Activated CD4-positive, alpha-beta T cell treated with anti-CD3 and anti-CD28 coated beads, Interleukin-2, amount 10 ng/mL, durations not matched to agents 24 days and 14 days (primary cell): ENCODE measurements at regions of chr19 and their contacts with region 1.

Region 1: GRCh38 chr19:9785367-9786331 is 17.1 kb upstream of the ZNF846 start:
- DNase-seq: peak; percentile 97
- H3K4me3 Mint-ChIP-seq: peak overlapping the region; percentile 90
- H3K27ac Mint-ChIP-seq: peak overlapping the region; percentile 94
- H3K4me1 Mint-ChIP-seq: peaks cover 19% of the 10 kb centered on the region
- H3K27me3 Mint-ChIP-seq: no peaks in the 10 kb centered on the region

Region 2: DNA sequence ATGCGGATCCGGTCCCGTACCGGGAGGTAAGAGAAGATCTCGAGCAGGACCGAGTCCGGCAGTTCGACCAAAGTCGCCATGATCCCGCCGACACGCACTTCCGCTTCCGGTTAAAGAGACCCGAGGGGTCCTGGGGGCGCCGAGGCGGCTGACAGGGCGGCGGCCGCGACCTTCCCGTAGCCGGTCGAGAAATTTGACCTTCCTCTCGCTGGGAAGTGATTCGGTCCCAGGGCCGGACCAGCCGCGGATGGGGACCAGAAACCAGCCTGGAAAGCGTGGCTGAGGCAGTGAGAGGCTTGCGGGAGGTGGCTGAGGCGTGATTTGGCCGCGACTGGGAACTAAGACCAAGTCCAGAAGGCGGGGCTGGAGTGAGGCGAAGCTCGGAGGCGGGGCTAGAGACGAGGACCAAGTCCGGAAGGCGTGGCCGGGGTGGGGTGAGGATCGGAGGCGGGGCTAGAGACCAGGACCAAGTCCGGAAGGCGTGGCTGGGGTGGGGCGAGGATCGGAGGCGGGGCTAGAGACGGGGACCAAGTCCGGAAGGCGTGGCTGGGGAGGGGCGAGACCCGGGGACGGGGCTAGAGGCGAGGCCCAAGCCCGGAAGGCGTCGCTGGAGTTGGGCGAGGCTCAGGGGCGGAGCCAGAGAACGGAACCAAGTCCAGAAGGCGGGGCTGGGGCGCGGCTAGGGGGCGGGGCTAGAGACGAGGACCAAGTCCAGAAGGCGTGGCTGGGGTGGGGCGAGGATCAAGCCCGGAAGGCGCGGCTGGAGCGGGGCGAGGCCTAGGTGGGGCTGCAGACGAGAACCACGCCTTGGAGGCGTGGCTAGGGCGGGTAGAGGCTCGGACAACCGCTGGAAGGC is 33.3 kb after region 1 on chr19 and contains the start of gene FBXL12:
- intact Hi-C with region 1: loop called (anchors 2 kb)
- DNase-seq: peak; percentile 100
- H3K4me3 Mint-ChIP-seq: peak within 1 kb of the TSS; percentile 93
- H3K27ac Mint-ChIP-seq: peak within 1 kb of the TSS; percentile 94
- H3K4me1 Mint-ChIP-seq: peaks cover 22% of the 10 kb centered on the region
- H3K27me3 Mint-ChIP-seq: no peaks in the 10 kb centered on the region
- total RNA-seq, gene FBXL12: 19.4 and 23.3 TPM in 2 replicates

Region 3: DNA sequence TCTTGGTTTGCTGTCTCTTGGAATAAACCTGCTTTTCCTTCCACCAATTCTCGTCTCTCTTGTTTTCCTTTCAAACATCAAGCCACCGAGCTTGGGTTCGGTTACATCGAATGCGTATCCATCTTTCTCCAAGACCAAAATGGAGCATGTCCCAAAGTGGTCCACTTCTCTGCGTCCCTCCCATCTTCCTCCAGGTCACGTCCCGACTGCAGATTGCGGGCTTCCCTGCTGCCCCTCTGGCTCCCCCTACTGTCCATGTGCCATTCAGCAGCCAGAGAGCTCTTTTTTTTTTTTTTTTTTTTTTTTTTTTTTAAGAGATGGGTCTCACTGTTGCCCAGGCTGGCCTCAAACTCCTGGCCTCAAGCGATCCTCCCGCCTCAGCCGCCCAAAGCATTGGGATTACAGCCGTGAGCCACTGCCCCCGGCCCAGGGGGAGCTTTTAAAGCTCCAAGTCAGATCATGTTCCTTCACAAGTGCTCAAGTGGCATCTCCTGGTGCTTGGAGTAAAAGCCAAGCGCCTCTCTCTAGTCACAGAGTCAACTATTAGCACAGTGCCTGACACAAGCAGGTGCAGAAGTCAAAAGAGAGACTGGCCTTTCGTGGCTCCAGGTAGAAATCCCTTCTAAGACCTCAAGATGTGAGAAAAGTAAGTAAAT is 214.7 kb after region 1 on chr19:
- intact Hi-C with region 1: no loop called
- DNase-seq: peak; percentile 89
- H3K4me3 Mint-ChIP-seq: no peak overlapping the region
- H3K27ac Mint-ChIP-seq: no peak overlapping the region
- H3K4me1 Mint-ChIP-seq: peaks cover 6% of the 10 kb centered on the region
- H3K27me3 Mint-ChIP-seq: peaks cover 17% of the 10 kb centered on the region